HEK293 (cell line): ENCODE measurements at regions of chr12 and their contacts with region 1.

Region 1: DNA sequence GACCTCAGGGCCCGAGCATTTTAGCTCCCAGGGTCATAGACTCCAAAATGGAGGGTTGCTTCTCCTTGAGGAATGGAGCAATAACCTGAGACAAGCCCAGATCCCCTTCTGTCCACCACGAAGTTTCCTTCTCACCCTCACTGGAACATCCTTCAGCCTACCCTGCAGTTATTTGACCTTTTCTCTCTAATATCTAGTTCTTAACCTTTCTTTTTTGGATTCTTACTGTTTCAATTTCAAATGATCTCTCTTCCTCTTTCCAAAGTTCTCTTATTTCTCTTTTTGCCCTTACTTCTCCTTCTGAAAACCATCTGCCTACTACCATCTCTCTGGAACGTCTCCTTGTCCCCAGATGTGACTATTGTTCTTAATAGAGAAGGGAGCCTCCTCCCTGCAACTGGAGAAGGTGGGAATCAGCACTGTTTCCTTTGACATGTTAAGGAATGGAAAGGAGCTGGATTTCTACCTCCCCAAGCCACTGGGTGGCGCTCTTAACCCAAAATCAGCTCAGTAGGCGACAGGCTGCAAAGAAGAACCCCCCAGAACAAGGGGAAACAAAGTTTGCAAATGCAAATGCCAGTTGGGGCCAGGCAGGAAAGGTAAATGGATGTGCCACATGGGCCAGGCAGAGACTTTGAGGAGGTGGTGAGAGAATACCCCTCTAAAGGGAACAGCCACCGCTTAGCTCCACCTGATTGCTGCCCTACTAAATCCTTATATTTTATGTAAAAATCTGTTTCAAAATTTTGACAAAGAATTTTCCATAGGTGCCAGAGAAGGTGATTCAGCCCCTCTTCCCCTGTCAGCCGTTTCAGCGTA is 22.4 kb upstream of the PDE1B start:
- H3K4me3 ChIP-seq: no peak overlapping the region
- H3K27ac ChIP-seq: no peak overlapping the region
- H3K4me1 ChIP-seq: no peaks in the 10 kb centered on the region
- CTCF ChIP-seq: peak; percentile 83

Region 2: GRCh38 chr12:54479421-54479820 is 47.6 kb before region 1 on chr12:
- CTCF ChIA-PET with region 1: no interaction called
- POLR2A ChIA-PET with region 1: no interaction called
- H3K4me3 ChIP-seq: no peak overlapping the region
- H3K27ac ChIP-seq: no peak overlapping the region
- H3K4me1 ChIP-seq: 0 out of 2 replicates have a peak, but pooled peaks cover 3% of the 10 kb centered on the region
- CTCF ChIP-seq: no peak

Region 3: GRCh38 chr12:54509617-54510016 is 17.4 kb before region 1 on chr12:
- CTCF ChIA-PET with region 1: interaction called, 13 read pairs
- POLR2A ChIA-PET with region 1: no interaction called
- H3K4me3 ChIP-seq: no peak overlapping the region
- H3K27ac ChIP-seq: no peak overlapping the region
- H3K4me1 ChIP-seq: no peaks in the 10 kb centered on the region
- CTCF ChIP-seq: no peak

Region 4: DNA sequence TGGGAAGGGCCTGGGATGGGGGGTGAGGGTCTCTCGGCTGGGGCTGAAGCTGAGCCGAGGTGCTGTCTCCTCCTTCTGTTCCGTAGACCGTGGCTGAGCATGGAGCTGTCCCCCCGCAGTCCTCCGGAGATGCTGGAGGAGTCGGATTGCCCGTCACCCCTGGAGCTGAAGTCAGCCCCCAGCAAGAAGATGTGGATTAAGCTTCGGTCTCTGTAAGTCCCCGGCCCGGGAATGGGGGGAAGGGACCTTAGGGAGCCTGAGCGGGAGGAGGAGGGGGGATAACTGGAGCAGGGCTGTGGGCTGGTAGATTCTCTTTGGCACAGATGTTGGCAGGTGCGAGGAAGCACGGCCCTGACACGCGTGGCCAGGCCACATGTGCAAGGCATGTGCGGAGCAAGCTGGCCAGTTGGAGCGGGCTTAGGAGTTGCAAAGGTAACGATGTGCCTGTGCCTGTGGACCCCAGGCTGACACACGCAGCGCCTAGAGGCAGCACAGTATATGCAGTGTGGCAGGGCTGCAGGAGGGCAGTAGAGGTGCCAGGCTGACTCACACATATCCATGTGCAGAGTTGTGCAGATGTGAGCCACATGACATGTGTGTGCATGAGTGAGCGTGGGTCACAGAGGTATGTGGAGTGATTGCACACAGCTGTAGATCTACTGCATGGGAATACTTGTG is 22.9 kb after region 1 on chr12:
- CTCF ChIA-PET with region 1: interaction called, 33 read pairs
- POLR2A ChIA-PET with region 1: interaction called, 3 read pairs
- H3K4me3 ChIP-seq: peak overlapping the region; percentile 59
- H3K27ac ChIP-seq: peak overlapping the region; percentile 30; the same call in 1 of the 2 replicates
- H3K4me1 ChIP-seq: 0 out of 2 replicates have a peak, but pooled peaks cover 3% of the 10 kb centered on the region
- CTCF ChIP-seq: no peak

Region 5: GRCh38 chr12:54571193-54572188 is 44.5 kb after region 1 on chr12:
- CTCF ChIA-PET with region 1: interaction called, 73 read pairs
- POLR2A ChIA-PET with region 1: no interaction called
- H3K4me3 ChIP-seq: no peak overlapping the region
- H3K27ac ChIP-seq: no peak overlapping the region
- H3K4me1 ChIP-seq: no peaks in the 10 kb centered on the region
- CTCF ChIP-seq: peak; percentile 35; the same call in 1 of the 2 replicates

Region 6: DNA sequence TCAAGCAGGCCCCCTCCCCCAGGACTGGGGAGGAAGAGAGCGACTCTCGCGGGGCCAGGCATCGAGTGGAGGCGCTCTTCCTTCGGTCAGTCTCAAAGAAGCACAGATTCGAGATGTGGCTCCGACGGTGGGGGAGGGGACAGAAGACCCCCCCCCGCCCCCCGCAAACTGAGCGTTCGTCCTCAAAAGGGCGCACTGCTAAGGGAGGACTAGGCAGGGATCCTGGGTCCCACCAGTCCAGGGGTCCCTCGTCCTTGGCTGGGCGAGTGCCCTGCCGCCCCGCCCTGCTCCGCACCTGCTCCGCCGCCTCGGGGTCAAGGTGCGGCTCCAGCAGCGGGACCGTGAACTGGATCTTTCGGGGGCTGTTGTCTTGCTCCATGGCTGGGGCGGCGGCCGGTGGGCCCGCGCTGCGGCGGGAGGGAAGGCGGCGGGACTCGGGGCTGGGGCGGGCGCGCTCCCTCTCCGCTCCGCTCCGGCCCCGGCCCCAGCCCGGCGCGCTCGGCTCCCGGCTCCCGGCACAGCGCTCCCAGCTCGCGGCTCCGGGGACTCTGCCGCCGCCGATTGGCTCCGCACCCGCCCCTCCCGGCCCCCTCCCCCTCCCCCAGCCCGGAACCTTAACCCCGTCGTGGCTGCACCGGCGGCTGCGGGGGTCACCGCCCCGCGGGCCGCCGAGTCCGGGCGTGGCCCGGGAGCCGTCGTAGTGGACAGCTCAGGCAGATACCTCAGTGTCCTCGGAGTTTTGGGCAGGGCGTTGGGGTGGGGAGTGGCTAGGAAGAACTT is 61.3 kb after region 1 on chr12 and contains the start of gene PPP1R1A:
- CTCF ChIA-PET with region 1: interaction called, 12 read pairs
- POLR2A ChIA-PET with region 1: interaction called, 3 read pairs
- H3K4me3 ChIP-seq: peak within 1 kb of the TSS; percentile 44
- H3K27ac ChIP-seq: no peak within 1 kb of the TSS; the same call in 1 of the 2 replicates
- H3K4me1 ChIP-seq: no peaks in the 10 kb centered on the region
- CTCF ChIP-seq: no peak

Region 7: DNA sequence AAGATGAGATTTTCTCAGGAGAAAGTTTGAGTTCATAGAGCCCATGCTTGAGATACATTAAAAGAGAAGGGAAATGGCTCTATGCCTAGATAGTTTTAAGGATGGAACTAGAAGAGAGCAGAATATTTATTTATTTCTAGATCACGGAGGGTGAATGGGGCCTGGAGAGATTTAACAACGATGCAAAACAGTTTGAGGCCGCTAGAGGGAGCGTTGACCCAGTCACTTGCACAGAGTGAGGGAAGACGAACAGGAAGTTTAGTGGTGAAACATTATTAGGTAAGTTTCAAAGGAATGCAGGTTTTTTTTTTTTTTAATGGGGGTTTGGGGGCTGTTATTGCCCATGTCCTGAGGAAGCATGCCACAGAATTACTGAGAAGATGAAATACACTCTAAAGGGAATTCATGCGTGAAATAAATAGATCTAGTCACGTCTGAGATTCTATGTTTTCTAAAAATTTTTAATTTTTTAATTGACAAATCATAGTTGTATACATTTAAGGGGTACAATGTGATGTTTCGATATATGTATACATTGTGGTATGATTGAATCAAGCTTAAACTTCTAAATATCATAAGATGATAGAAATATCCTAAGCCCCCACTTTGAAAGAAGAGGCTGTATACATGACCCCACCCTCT is 76.3 kb after region 1 on chr12:
- CTCF ChIA-PET with region 1: interaction called, 40 read pairs
- POLR2A ChIA-PET with region 1: no interaction called
- H3K4me3 ChIP-seq: no peak overlapping the region
- H3K27ac ChIP-seq: no peak overlapping the region
- H3K4me1 ChIP-seq: no peaks in the 10 kb centered on the region
- CTCF ChIP-seq: peak; percentile 73

Region 8: GRCh38 chr12:54749191-54749818 is 222.3 kb after region 1 on chr12:
- CTCF ChIA-PET with region 1: interaction called, 11 read pairs
- POLR2A ChIA-PET with region 1: no interaction called
- H3K4me3 ChIP-seq: no peak overlapping the region
- H3K27ac ChIP-seq: no peak overlapping the region
- H3K4me1 ChIP-seq: no peaks in the 10 kb centered on the region
- CTCF ChIP-seq: peak; percentile 45; the same call in 1 of the 2 replicates